MCF 10A (cell line): ENCODE measurements at regions of chr12 and their contacts with region 1.

Region 1: DNA sequence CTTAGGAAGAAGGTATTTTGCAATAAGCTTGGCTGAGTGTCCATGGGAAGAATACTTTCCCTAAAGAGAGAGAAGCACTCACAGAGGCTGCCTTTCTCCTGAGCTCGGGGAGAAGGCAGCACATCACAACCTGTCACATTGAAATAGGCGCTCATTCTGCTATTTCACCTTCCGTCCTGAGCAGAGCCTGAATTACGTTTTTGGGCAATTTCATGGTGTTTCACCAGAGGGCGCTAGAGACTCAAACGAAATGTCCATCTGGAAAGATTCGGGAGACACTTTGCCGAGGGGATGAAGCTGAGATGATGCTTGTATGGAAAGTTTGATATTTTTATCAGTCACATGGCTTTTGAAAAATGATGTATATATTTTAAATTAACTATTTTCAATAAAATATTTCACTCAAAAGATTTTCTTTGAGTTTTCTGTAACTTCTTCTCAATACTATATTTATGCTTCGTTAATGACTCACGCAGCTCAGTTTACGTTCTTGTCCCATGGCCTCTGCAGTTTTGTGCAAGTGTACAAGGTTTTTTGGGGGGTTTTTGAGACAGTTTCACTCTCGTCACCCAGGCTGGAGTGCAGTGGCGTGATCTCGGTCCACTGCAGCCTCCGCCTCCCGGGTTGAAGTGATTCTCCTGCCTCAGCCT is 17.4 kb upstream of the B4GALNT3 start:
- DNase-seq: peak; percentile 66
- H3K4me3 Mint-ChIP-seq: no peak overlapping the region
- H3K27ac Mint-ChIP-seq: no peak overlapping the region
- H3K4me1 Mint-ChIP-seq: no peaks in the 10 kb centered on the region
- H3K27me3 Mint-ChIP-seq: no peaks in the 10 kb centered on the region
- CTCF ChIP-seq: peak; percentile 75

Region 2: GRCh38 chr12:288687-289086 is 153.7 kb before region 1 on chr12:
- CTCF ChIA-PET with region 1: no interaction called
- POLR2A ChIA-PET with region 1: no interaction called
- intact Hi-C with region 1: no loop called
- DNase-seq: peak; percentile 46
- H3K4me3 Mint-ChIP-seq: no peak overlapping the region
- H3K27ac Mint-ChIP-seq: no peak overlapping the region
- H3K4me1 Mint-ChIP-seq: peaks cover 18% of the 10 kb centered on the region
- H3K27me3 Mint-ChIP-seq: no peaks in the 10 kb centered on the region
- CTCF ChIP-seq: no peak

Region 3: GRCh38 chr12:452667-453210 is 10.4 kb after region 1 on chr12:
- CTCF ChIA-PET with region 1: interaction called, 42 read pairs
- POLR2A ChIA-PET with region 1: no interaction called
- intact Hi-C with region 1: no loop called
- DNase-seq: no peak
- H3K4me3 Mint-ChIP-seq: no peak overlapping the region
- H3K27ac Mint-ChIP-seq: no peak overlapping the region
- H3K4me1 Mint-ChIP-seq: no peaks in the 10 kb centered on the region
- H3K27me3 Mint-ChIP-seq: peaks cover 28% of the 10 kb centered on the region
- CTCF ChIP-seq: peak; percentile 49

Region 4: DNA sequence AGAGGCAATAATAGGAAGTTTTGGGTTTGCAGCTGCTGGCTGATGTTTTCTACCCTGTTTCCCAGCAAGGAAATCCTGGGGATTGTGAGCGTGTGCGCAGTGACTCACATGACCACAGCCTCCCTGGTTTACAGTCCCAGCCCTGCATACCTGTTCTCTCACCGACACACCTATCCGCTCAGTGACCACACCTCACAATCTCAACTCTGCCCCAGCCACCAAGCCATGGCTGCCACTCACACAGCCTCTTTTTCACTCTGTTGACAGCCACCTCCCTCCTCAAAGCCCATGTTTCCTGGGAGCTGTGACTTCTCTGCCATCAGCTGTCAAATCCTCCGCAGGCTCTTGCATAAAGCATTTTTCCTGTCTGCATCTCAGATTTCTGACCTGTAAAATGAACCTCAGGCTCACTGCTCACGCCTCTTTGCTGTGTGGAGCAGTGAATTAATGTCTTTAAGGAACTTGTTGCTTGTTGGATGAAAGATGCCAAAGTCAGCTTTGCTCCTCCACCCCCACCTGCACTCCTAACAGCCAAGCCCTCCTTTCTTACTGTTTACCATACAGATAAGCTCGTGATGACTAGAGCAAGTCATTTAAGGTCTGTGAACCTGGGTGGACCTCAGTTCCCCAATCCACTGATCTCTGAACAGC is 60.9 kb after region 1 on chr12:
- CTCF ChIA-PET with region 1: interaction called, 17 read pairs
- POLR2A ChIA-PET with region 1: no interaction called
- intact Hi-C with region 1: no loop called
- DNase-seq: peak; percentile 80
- H3K4me3 Mint-ChIP-seq: peak overlapping the region; percentile 36
- H3K27ac Mint-ChIP-seq: peak overlapping the region; percentile 90
- H3K4me1 Mint-ChIP-seq: peaks cover 13% of the 10 kb centered on the region
- H3K27me3 Mint-ChIP-seq: no peaks in the 10 kb centered on the region
- CTCF ChIP-seq: no peak

Region 5: DNA sequence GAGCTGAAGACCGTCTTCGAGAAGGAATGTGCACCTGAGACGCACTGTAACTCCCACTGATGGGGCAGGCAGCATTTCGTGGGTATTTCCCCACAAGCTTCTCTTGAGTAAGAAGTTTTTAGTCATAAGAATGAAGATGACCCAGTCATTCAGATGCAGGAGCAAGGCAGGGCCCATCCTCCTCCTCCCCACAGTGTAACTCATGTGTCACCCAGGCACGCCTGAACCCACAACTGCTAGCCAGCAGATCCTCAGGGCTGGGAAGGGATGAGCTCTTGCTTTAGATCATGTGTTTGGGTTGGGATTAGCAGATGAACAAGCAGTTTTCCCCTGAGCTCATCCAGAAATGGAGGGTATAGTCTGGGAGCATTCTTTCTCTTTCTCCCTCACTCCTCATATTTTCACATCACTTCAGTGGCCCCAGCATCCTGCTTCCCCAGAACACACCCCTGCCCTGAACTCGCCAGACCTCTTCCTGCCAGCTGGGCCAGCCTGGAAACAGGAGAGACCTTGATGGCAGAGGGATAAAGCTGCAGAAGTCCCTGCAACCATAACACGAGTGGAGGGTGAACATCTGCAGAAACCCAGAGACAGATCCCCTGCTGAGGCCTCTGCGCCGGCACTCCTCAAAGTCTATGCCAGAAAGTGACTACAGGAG is 90.7 kb after region 1 on chr12:
- CTCF ChIA-PET with region 1: interaction called, 37 read pairs
- POLR2A ChIA-PET with region 1: interaction called, 3 read pairs
- intact Hi-C with region 1: no loop called
- DNase-seq: peak; percentile 61
- H3K4me3 Mint-ChIP-seq: no peak overlapping the region
- H3K27ac Mint-ChIP-seq: no peak overlapping the region
- H3K4me1 Mint-ChIP-seq: peaks cover 15% of the 10 kb centered on the region
- H3K27me3 Mint-ChIP-seq: no peaks in the 10 kb centered on the region
- CTCF ChIP-seq: no peak

Region 6: DNA sequence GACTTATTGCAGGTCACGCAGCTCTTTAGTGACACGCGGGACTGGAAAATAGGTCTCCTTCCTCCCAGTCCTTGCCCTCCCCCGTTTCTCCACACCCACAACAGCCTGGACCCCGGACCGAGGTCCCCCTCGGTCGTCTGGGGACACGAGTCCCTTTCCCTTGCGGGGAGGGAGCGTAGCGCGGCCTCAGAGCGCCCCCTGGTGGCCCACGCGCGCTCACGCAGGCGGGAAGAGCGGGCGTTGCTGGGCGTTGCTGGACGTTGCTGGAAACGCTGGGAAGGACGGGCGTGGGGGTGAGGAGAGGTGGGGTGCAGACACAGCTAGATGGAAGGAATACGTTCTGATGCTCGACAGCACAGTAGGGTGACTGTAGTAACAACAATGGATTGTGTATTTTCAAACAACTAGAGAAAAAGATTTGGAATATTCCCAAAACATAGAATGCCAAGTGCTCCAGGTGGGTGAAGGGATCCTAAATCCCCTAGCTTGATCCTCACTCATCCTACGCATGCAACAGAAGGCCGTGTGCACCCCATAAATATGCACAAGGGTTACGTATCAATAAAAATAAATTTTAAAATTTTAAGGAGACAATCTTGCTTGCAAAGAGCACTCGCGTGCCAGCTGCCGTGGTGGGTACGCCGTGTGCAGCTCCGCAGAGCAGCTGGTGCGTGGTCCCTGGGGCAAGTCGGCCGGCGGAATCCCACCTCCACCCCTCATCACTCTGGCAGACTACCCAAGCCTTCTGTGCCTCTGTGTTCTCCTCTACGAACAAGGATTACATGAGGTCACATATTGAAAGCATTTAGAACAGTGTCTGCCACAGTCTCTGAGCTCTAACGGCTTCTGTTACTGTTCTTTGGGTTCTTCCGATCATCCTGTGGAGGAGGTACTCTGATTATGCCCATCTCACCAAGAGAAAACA is 104.8 kb after region 1 on chr12:
- CTCF ChIA-PET with region 1: interaction called, 131 read pairs
- POLR2A ChIA-PET with region 1: interaction called, 7 read pairs
- intact Hi-C with region 1: loop called (anchors 1 kb)
- DNase-seq: peak; percentile 69
- H3K4me3 Mint-ChIP-seq: no peak overlapping the region
- H3K27ac Mint-ChIP-seq: no peak overlapping the region
- H3K4me1 Mint-ChIP-seq: no peaks in the 10 kb centered on the region
- H3K27me3 Mint-ChIP-seq: peaks cover 42% of the 10 kb centered on the region
- CTCF ChIP-seq: peak; percentile 96